Ascending aorta (tissue), 2 donors: ENCODE measurements at regions of chr11 and their contacts with region 1.

Region 1: DNA sequence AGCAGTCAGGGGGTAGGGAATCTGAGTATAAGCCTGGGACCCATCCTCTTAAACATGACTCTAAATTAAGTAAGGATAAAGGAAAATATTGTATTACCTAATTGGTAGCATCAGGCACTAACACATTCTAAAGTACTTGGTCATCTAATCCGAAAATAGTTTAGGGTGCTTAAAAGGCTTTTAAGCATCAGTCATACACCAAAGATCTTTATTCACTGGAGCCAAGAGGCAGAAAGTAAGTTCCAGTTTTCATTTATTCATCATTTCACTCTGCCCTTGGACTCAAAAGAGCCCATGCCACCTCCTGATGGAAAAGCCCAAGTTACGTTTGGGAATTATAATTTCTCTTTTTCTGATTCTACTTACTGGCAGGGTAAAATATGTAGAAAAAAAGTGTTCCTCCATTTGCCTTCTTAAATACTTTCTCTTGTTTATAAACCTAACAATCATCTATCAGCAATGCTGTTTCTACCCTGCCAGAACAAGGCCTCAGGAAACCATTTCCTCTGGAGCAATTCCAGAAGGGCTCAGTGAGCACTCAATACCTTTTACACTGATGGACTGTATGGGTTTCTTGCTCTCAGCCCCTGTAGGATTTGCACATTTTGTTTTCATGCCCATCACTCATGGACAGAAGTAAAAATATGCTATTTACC is 120.1 kb upstream of the SLC5A12 start:
- DNase-seq: peak in 1 of 2 donors; percentile 70
- H3K4me3 ChIP-seq: no peak overlapping the region
- H3K27ac ChIP-seq: peak overlapping the region; percentile 94 to 96
- H3K4me1 ChIP-seq: peaks cover 13 to 64% of the 10 kb centered on the region in 2 donors
- H3K27me3 ChIP-seq: no peaks in the 10 kb centered on the region
- CTCF ChIP-seq: no peak

Region 2: GRCh38 chr11:26820739-26821138 is 21.2 kb before region 1 on chr11:
- intact Hi-C with region 1: loop called (anchors 2 kb)
- DNase-seq: peak in 1 of 2 donors; percentile 69
- H3K4me3 ChIP-seq: no peak overlapping the region
- H3K27ac ChIP-seq: peak overlapping the region; percentile 56 to 67
- H3K4me1 ChIP-seq: peaks cover 0 to 12% of the 10 kb centered on the region in 2 donors
- H3K27me3 ChIP-seq: no peaks in the 10 kb centered on the region
- CTCF ChIP-seq: no peak

Region 3: GRCh38 chr11:27672836-27673464 is 831.0 kb after region 1 on chr11:
- intact Hi-C with region 1: no loop called
- DNase-seq: no peak
- H3K4me3 ChIP-seq: no peak overlapping the region
- H3K27ac ChIP-seq: no peak overlapping the region
- H3K4me1 ChIP-seq: no peaks in the 10 kb centered on the region
- H3K27me3 ChIP-seq: no peaks in the 10 kb centered on the region
- CTCF ChIP-seq: no peak